ENCODE measurements at regions of chr2 and their contacts with region 1.

Region 1: DNA sequence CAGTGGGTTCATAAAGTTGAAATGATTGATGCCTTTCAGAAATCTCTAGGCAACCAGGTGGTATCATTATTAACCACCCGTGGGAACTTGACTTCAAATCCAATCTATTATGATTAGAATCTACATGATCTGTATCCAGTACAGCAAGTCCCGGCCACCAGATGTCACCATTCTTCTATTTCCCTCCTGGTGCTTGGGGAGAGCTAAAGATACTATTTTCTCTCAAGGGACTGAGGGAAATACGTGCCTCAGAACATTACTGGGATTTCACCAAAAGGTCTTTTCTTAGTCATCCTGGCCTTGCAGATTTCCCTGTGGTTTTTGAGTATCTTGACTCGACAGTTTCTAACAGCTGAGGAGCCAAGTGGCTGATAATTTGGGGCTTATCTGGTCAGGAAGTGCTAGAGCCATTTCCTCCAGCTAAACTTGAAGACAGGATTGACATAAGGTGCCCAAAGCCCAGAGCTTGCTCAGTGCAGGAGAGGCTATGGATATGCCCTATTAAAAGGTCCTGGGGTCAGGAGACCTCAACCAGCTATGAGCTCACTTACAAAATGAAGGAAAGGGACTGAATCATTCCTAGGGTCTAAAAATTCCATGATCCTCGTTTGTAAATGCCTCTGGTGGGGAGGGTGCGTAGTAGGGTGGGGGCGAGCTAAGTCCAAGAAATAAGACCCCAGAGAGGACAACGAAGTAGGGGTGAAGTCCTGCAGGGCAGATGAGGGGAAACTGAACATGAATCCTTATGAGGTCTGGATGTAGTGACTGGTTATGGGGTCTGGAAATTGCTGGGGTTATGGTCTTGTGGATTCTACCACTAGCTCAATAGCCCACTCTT is 135.4 kb upstream of the MGAT5 start:
- DNase-seq: peak; percentile 91
- H3K4me3 Mint-ChIP-seq: peak overlapping the region; percentile 95
- H3K27ac Mint-ChIP-seq: no peak overlapping the region
- H3K4me1 Mint-ChIP-seq: peaks cover 35% of the 10 kb centered on the region
- H3K27me3 Mint-ChIP-seq: peaks cover 4% of the 10 kb centered on the region

Region 2: DNA sequence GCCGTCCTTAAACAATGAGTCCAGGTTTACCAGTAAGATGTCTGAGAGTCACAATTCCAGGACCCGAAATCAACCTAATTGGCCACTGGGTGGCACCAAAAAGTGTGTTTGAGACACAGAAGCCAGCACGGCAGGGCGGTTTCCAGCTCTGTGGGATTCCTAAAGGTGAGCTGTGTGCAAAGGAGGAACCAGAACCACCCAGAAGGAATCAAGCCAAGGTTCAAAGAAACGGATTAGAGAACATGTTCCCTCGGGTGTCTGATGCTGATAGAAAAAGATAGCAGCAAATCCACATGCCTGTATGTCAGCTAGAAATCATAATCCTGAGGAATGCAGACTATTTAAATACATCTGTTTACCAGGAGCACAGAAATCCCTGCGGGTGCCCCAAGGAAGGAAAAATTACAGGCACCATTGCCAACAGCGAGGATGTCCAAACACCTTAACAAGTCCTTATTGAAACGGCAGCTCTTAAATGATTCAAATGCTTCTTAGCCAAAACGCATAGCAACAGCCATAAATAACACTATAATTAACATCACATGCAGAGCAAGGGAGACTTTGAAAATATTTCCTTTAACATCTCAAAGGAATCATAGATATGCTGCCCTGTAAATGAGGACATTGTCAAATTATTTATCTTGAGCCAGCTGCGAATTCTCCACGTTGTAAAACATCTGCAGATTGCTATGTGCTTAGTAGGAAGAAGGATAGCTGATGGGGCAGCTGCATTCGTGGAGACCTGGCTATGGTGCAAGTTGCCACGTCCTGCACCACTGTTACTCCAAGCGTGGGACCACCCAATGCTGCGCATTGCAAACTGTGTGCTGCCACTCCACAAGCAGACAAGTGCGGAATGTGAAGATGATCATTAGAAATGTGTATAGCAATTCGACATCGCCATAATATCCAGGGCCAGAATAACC is 231.5 kb before region 1 on chr2:
- CTCF ChIA-PET with region 1: interaction called, 7 read pairs
- POLR2A ChIA-PET with region 1: no interaction called
- intact Hi-C with region 1: loop called (anchors 5 kb)
- DNase-seq: peak; percentile 61
- H3K4me3 Mint-ChIP-seq: no peak overlapping the region
- H3K27ac Mint-ChIP-seq: no peak overlapping the region
- H3K4me1 Mint-ChIP-seq: no peaks in the 10 kb centered on the region
- H3K27me3 Mint-ChIP-seq: peaks cover 5% of the 10 kb centered on the region

Region 3: DNA sequence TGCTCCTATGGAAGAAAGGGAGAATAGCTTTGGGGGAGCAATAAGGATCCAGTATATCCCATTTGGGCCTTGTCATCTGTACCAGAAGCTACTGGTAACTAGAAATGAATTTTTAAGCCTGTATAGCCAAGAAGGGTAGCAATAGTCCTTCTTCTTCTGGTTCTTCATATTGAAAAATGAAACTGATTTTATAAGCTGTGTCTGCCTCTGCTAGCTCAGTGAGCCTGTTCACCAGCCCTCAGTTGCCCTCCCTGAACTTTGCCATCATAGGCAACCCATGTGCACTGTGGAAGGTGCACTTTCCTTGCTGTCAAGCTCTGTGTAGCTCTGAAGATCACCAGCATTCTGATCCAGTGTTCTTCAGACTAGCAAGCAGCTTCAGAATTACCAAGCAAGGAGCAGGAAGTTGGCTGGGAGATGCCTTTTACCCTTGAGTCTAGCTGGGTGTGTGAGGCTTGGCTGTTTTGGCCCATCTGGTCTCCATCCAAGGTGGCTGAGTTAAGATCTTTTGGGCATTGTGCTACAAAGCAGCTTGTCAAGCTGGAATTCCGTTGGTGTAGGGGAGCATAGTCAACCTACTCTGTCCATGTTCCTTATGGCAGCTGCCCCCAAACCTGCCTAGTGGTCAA is 79.6 kb after region 1 on chr2:
- CTCF ChIA-PET with region 1: interaction called, 34 read pairs
- POLR2A ChIA-PET with region 1: interaction called, 18 read pairs
- intact Hi-C with region 1: no loop called
- DNase-seq: no peak
- H3K4me3 Mint-ChIP-seq: peak overlapping the region; percentile 36
- H3K27ac Mint-ChIP-seq: peak overlapping the region; percentile 79
- H3K4me1 Mint-ChIP-seq: peaks cover 84% of the 10 kb centered on the region
- H3K27me3 Mint-ChIP-seq: no peaks in the 10 kb centered on the region

Region 4: DNA sequence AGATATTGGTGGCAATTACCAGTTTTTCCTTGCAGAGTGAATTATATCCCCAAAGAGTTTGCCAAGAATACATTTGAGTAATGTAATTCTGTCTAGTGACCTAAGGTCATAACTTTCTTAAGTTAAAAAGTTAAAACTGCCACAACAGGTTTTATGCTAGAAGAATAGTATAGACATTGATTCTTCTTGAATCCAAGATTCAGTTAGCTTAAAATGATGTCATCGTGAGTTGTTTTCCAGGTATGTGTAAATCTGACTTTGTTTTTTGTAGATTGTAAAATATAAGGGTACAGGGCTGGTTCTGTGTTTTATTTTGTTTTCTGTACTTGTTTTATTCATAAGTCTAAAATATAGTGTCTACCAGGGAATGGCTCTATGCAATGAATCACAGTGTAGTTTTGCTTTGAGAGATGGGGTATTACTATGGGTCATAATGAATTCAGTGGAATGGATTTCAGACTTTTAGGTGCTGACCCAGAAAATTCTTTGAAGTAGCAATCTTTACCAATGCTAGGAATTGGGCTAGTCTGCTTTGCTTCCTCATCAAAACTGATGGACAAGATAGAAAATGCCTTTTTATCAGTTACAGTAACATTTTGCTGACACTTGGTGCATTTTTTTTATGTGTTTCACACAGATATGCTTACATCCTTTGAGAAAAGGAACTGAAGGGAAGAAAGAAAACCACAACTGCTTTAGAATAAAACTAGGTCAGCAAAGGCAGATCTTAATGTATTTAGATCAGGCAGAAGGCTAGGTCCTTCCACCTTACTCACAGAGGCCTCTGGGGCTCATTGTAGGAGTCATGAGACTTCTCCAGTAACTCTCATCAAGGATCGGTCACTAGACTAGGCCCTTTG is 114.6 kb after region 1 on chr2:
- CTCF ChIA-PET with region 1: interaction called, 92 read pairs
- POLR2A ChIA-PET with region 1: interaction called, 4 read pairs
- intact Hi-C with region 1: loop called (anchors 1 kb)
- DNase-seq: peak; percentile 52
- H3K4me3 Mint-ChIP-seq: peak overlapping the region; percentile 34
- H3K27ac Mint-ChIP-seq: peak overlapping the region; percentile 93
- H3K4me1 Mint-ChIP-seq: peaks cover 90% of the 10 kb centered on the region
- H3K27me3 Mint-ChIP-seq: no peaks in the 10 kb centered on the region

Region 5: GRCh38 chr2:134290358-134290757 is 171.9 kb after region 1 on chr2:
- CTCF ChIA-PET with region 1: interaction called, 17 read pairs
- POLR2A ChIA-PET with region 1: interaction called, 3 read pairs
- intact Hi-C with region 1: loop called (anchors 2 kb)
- DNase-seq: peak; percentile 31
- H3K4me3 Mint-ChIP-seq: no peak overlapping the region
- H3K27ac Mint-ChIP-seq: no peak overlapping the region
- H3K4me1 Mint-ChIP-seq: peaks cover 21% of the 10 kb centered on the region
- H3K27me3 Mint-ChIP-seq: no peaks in the 10 kb centered on the region

Region 6: GRCh38 chr2:134452042-134452733 is 333.7 kb after region 1 on chr2:
- CTCF ChIA-PET with region 1: interaction called, 42 read pairs
- POLR2A ChIA-PET with region 1: interaction called, 3 read pairs
- intact Hi-C with region 1: loop called (anchors 1 kb)
- DNase-seq: no peak
- H3K4me3 Mint-ChIP-seq: no peak overlapping the region
- H3K27ac Mint-ChIP-seq: no peak overlapping the region
- H3K4me1 Mint-ChIP-seq: no peaks in the 10 kb centered on the region
- H3K27me3 Mint-ChIP-seq: no peaks in the 10 kb centered on the region

Region 7: GRCh38 chr2:134918526-134919340 is 800.2 kb after region 1 on chr2 and contains the start of gene CCNT2:
- CTCF ChIA-PET with region 1: no interaction called
- POLR2A ChIA-PET with region 1: no interaction called
- intact Hi-C with region 1: loop called (anchors 2 kb)
- DNase-seq: peak; percentile 100
- H3K4me3 Mint-ChIP-seq: peak within 1 kb of the TSS; percentile 90
- H3K27ac Mint-ChIP-seq: peak within 1 kb of the TSS; percentile 97
- H3K4me1 Mint-ChIP-seq: peaks cover 35% of the 10 kb centered on the region
- H3K27me3 Mint-ChIP-seq: peaks cover 5% of the 10 kb centered on the region
- total RNA-seq, gene CCNT2: 25.1 to 25.7 TPM